Activated CD4-positive, alpha-beta T cell treated with anti-CD3 and anti-CD28 coated beads, Interleukin-2, amount 10 ng/mL, durations not matched to agents 24 days and 14 days (primary cell): ENCODE measurements at regions of chr20 and their contacts with region 1.

Region 1: DNA sequence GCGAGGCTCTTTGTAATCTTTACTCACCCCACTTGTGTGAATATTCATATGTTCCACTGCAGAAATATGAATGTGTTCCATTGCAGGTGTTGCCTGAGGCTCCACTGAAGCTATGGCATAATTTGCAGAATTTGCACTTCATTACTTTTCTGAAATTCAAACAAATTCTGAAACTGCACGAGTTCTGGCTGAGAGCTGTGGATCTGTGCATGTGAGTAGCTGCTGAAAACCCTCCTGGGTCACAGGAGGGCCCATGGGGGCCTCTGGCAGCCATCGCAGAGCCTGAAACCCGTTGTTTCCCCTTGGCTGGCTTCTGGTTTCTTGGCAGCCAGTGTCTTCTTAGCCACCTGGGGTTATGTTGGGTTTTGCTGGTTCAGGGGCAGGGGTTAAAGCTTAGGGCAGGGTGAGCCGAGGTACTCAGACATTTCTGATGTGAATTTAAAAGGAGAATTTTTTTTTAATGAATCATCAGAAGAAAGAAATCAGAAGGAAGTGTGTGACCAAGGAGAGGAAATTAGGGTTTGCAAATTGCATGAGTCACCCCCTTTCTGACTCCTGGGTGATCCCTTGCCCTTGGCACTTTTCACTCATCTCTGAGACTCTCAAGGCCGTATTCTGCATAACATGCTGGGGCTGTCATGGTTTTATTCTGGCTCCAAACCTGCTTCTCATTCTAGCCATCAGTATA is 40.6 kb downstream of the TOX2 start:
- DNase-seq: peak; percentile 80
- H3K4me3 Mint-ChIP-seq: peak overlapping the region; percentile 29
- H3K27ac Mint-ChIP-seq: peak overlapping the region; percentile 88
- H3K4me1 Mint-ChIP-seq: peaks cover 62% of the 10 kb centered on the region
- H3K27me3 Mint-ChIP-seq: peaks cover 15% of the 10 kb centered on the region

Region 2: GRCh38 chr20:43456809-43457639 is 498.2 kb before region 1 on chr20:
- intact Hi-C with region 1: loop called (anchors 5 kb)
- DNase-seq: peak; percentile 96
- H3K4me3 Mint-ChIP-seq: peak overlapping the region; percentile 93
- H3K27ac Mint-ChIP-seq: peak overlapping the region; percentile 98
- H3K4me1 Mint-ChIP-seq: peaks cover 22% of the 10 kb centered on the region
- H3K27me3 Mint-ChIP-seq: peaks cover 17% of the 10 kb centered on the region

Region 3: GRCh38 chr20:43846516-43846905 is 108.7 kb before region 1 on chr20:
- intact Hi-C with region 1: loop called (anchors 2 kb)
- DNase-seq: no peak
- H3K4me3 Mint-ChIP-seq: no peak overlapping the region
- H3K27ac Mint-ChIP-seq: peak overlapping the region; percentile 72
- H3K4me1 Mint-ChIP-seq: peaks cover 34% of the 10 kb centered on the region
- H3K27me3 Mint-ChIP-seq: peaks cover 1% of the 10 kb centered on the region

Region 4: DNA sequence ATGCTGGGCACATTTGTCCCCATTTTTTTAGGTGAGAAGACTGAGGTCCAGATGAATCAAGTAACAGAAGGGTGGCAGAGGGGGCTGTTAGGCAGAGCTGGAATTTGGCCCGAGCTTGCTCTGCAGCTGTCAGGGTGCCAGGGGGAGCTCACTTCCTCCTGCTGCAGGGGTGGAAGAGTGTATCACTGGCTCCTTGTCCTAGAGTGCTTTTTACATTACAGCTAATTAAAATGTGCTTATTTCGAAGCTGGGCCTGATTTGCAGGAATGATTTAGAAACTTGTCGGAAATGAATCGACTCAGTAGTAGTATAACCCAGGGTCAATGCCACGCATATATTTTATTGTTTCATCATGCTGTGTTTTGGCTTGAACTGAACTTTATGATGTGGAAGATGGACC is 29.4 kb before region 1 on chr20:
- intact Hi-C with region 1: loop called (anchors 2 kb)
- DNase-seq: no peak
- H3K4me3 Mint-ChIP-seq: peak overlapping the region; percentile 23
- H3K27ac Mint-ChIP-seq: no peak overlapping the region
- H3K4me1 Mint-ChIP-seq: peaks cover 50% of the 10 kb centered on the region
- H3K27me3 Mint-ChIP-seq: peaks cover 35% of the 10 kb centered on the region

Region 5: DNA sequence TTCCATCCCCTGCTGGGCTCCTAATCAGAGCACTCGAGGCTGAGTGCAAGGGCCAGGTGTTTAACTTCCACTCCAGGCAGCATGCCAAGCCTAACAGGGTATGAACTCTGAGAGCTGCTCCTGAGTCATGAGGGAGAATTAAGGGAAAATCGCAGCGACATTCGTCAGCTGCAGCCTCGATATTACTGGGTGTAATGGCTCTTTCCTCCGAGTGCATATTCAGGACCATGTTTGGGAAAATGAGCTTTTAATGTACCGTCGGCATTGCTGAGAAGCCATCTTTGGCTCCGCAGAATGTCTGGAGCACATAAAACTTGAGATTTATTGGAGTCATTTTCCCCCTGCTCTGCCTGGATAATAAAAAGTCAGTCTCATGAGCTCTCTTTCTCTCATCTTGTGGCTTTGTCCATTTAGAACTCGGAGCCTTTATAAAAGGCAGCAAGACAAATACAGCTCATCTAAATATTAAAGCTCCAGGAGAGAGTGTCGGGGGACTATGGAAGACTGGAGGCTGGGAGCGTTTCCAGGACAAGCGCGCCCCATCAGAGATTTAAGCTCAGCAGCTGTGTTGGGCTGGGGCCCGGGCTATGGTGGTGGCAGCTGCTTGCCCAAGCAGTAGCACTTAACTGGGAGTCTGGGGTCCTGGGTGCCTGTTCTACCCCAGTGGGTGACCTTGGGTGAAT is 63.2 kb after region 1 on chr20:
- intact Hi-C with region 1: loop called (anchors 2 kb)
- DNase-seq: no peak
- H3K4me3 Mint-ChIP-seq: no peak overlapping the region
- H3K27ac Mint-ChIP-seq: no peak overlapping the region
- H3K4me1 Mint-ChIP-seq: peaks cover 23% of the 10 kb centered on the region
- H3K27me3 Mint-ChIP-seq: peaks cover 38% of the 10 kb centered on the region